CD8-positive, alpha-beta T cell (primary cell): ENCODE measurements at regions of chr16 and their contacts with region 1.

Region 1: DNA sequence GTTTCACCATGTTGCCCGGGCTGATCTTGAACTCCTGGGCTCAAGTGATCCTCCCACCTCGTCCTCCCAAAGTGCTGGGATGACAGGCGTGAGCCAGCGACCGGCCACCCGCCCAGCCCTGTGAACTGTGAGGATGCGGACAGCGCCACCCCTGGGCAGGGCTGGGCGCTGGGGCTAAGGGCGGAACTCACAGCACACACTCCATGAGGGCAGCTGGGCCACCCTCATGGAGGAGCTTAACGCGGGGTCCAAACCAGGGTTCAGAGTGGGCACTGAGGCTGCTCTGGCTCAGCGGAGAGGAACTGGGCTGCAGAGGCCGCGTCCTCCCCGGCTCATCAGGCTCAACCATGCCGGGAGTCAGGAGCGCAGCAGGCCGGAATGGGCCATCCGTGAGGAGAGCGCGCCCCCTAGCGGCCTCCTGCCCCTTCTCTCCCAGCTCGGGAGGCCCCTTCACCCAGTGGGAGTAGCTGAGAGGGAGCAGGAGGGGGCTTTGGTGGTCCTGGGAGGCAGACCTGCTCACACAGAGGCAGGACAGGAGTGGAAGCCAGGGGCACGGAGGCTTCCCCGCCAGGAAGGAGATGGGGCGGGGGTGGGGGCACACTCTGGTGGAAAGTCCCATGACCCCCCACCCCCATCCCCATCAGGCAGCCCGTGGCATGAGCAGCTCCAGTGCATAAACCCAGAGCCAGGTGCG is 13.8 kb downstream of the CORO7 start:
- DNase-seq: peak in 8 of 9 experiments; percentile 50 to 83 (median 68)
- ATAC-seq: peak; percentile 37
- H3K4me3 ChIP-seq: no peak overlapping the region
- H3K4me3 Mint-ChIP-seq: no peak overlapping the region
- H3K27ac ChIP-seq: no peak overlapping the region
- H3K27ac Mint-ChIP-seq: no peak overlapping the region
- H3K4me1 ChIP-seq: no peaks in the 10 kb centered on the region
- H3K4me1 Mint-ChIP-seq: peaks cover 19% of the 10 kb centered on the region
- H3K27me3 ChIP-seq: no peaks in the 10 kb centered on the region
- H3K27me3 Mint-ChIP-seq: no peaks in the 10 kb centered on the region
- CTCF ChIP-seq: peak; percentile 71

Region 2: DNA sequence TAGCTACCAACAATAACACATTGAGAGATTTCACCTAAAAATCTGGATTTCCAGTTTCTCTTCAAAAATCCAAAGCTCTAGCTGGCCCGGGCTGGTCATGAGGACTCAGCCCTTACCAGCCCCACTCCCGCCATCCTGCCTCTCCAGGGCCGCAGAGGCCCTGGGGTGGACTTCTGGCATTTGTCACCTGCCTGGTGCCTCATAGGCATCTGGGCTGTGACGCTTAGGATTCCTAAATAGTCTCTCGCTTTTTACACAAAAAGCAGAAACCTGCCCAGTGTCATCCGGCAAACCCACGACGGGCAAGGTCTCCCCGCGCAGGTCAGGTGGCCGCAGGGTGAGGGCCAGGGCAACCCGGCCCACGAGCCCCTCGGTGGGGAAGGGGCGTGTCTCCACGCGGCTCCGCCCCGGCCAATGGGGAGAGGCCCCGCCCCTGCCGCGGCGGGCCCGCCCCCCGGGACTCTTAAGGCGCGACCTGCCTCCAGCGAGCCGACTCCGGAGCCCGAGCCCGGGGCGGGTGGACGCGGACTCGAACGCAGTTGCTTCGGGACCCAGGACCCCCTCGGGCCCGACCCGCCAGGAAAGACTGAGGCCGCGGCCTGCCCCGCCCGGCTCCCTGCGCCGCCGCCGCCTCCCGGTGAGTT is 31.1 kb before region 1 on chr16 and contains the start of gene VASN:
- CTCF ChIA-PET with region 1: interaction called, 15 read pairs
- POLR2A ChIA-PET with region 1: no interaction called
- intact Hi-C with region 1: no loop called
- DNase-seq: peak; percentile 53 to 84 (median 75)
- ATAC-seq: peak; percentile 74
- H3K4me3 ChIP-seq: peak within 1 kb of the TSS; percentile 28 to 54
- H3K4me3 Mint-ChIP-seq: peak within 1 kb of the TSS; percentile 84
- H3K27ac ChIP-seq: no peak within 1 kb of the TSS
- H3K27ac Mint-ChIP-seq: peak within 1 kb of the TSS; percentile 32
- H3K4me1 ChIP-seq: peaks cover 19% of the 10 kb centered on the region
- H3K4me1 Mint-ChIP-seq: peaks cover 19% of the 10 kb centered on the region
- H3K27me3 ChIP-seq: no peaks in the 10 kb centered on the region
- H3K27me3 Mint-ChIP-seq: no peaks in the 10 kb centered on the region
- CTCF ChIP-seq: no peak
- total RNA-seq, gene VASN: 0.57 to 0.83 TPM